Breast epithelium (tissue), 4 donors: ENCODE measurements at regions of chr7 and their contacts with region 1.

Region 1: DNA sequence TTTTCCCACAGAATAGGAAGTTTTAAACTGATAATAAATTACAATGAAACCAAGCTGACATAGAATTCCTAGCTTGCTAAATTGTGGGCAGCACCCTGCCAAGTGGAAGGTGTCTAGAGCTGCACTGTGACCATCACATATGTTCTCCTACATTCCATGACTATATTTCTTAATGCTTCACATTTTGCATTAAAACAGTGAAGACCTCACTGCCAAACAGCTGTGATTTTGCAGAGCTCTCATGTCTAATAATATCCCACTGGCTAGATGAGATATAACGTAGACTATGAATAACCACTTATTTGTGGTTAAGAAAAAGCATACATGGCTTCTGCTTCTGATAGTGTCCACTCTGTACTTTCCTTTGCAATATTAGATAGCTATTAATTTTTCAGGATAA is 228.3 kb upstream of the TEX47 start:
- DNase-seq: no peak
- H3K4me3 ChIP-seq: no peak overlapping the region
- H3K27ac ChIP-seq: no peak overlapping the region
- H3K4me1 ChIP-seq: no peaks in the 10 kb centered on the region
- H3K27me3 ChIP-seq: no peaks in the 10 kb centered on the region
- CTCF ChIP-seq: no peak
- POLR2A ChIP-seq: no peak

Region 2: GRCh38 chr7:88254716-88255115 is 769.2 kb before region 1 on chr7:
- intact Hi-C with region 1: loop called (anchors 5 kb)
- DNase-seq: no peak
- H3K4me3 ChIP-seq: no peak overlapping the region
- H3K27ac ChIP-seq: no peak overlapping the region
- H3K4me1 ChIP-seq: no peaks in the 10 kb centered on the region
- H3K27me3 ChIP-seq: no peaks in the 10 kb centered on the region
- CTCF ChIP-seq: no peak
- POLR2A ChIP-seq: no peak

Region 3: DNA sequence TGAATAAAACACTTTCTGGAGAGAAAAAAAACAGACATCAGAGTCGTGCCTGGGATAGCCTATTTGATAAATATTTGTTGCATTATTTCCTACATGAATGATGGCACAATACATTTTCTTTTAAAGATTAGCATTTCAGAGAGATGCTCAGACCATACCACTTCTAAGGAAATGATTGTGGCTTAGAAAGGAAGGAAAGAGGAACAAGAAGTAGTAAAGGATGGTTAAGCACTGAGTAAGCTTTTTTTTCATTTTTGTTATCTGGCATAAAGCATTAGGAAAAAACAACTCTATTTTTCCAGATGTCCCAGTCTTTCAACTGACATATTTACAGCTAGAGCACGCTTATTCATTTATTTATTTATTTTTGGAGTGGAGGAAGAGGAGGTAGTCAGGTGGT is 30.5 kb after region 1 on chr7:
- intact Hi-C with region 1: no loop called
- DNase-seq: no peak
- H3K4me3 ChIP-seq: no peak overlapping the region
- H3K27ac ChIP-seq: no peak overlapping the region
- H3K4me1 ChIP-seq: no peaks in the 10 kb centered on the region
- H3K27me3 ChIP-seq: no peaks in the 10 kb centered on the region
- CTCF ChIP-seq: no peak
- POLR2A ChIP-seq: no peak